WTC11 (cell line): ENCODE measurements at regions of chr16 and their contacts with region 1.

Region 1: DNA sequence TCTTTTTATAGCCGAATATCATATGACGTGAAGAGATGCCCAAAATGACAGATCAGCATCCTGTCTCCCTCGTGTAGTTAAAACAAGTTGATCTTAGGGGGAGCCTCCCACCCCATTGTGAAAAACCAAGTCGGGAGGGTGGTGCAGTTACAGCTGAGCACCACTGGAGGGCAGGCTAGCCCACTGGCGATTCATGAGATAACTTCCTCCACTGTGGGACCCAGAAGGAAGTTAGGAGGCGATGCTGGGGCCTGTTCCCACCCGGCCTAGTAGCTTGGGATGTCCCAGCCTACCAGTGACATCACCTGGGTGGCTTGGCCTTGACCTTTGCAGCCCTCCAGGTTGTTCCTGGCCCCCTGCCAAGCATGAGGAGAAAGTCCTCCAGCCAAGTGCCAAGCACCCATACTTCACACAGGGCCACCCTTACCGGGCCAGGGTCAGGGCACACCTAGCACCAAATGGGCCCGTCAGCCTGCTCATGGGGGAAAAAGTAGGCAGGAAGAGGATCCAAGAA is 8.1 kb upstream of the CPNE2 start:
- DNase-seq: peak; percentile 81
- ATAC-seq: peak; percentile 87
- H3K4me3 Mint-ChIP-seq: no peak overlapping the region
- H3K27ac Mint-ChIP-seq: no peak overlapping the region
- H3K4me1 Mint-ChIP-seq: peaks cover 9% of the 10 kb centered on the region
- H3K27me3 Mint-ChIP-seq: peaks cover 3% of the 10 kb centered on the region; the same call in 1 of the 2 replicates
- CTCF ChIP-seq: peak; percentile 98

Region 2: DNA sequence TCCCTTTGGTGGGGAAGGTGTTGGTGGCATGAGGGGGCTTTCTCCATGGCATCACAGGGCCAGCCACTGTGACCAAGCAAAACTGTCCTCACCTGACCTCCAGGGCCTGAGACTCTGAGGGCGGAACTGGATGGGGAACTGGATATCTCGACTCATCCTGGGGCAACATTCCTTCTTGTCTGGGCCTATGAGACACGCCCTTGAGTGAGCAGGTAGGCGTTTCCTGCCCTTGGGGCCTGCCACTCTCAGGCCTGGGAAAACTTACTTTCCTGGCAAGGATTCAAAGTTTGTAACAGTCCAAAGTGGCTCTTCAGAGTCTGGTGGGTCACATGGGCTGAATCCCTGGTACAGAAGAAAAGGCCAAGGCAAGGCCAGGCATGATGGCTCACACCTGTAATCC is 392.4 kb before region 1 on chr16:
- CTCF ChIA-PET with region 1: no interaction called
- POLR2A ChIA-PET with region 1: no interaction called
- DNase-seq: no peak
- ATAC-seq: peak; percentile 94
- H3K4me3 Mint-ChIP-seq: no peak overlapping the region
- H3K27ac Mint-ChIP-seq: 0 out of 2 replicates have a peak overlapping the region, but pooled peaks have one; percentile 15
- H3K4me1 Mint-ChIP-seq: peaks cover 7% of the 10 kb centered on the region
- H3K27me3 Mint-ChIP-seq: no peaks in the 10 kb centered on the region
- CTCF ChIP-seq: no peak

Region 3: GRCh38 chr16:57098188-57098841 is 14.0 kb after region 1 on chr16:
- CTCF ChIA-PET with region 1: interaction called, 46 read pairs
- POLR2A ChIA-PET with region 1: no interaction called
- DNase-seq: peak; percentile 41
- ATAC-seq: peak; percentile 69
- H3K4me3 Mint-ChIP-seq: no peak overlapping the region
- H3K27ac Mint-ChIP-seq: peak overlapping the region; percentile 75; the same call in 1 of the 2 replicates
- H3K4me1 Mint-ChIP-seq: peaks cover 37% of the 10 kb centered on the region
- H3K27me3 Mint-ChIP-seq: peaks cover 13% of the 10 kb centered on the region
- CTCF ChIP-seq: no peak

Region 4: DNA sequence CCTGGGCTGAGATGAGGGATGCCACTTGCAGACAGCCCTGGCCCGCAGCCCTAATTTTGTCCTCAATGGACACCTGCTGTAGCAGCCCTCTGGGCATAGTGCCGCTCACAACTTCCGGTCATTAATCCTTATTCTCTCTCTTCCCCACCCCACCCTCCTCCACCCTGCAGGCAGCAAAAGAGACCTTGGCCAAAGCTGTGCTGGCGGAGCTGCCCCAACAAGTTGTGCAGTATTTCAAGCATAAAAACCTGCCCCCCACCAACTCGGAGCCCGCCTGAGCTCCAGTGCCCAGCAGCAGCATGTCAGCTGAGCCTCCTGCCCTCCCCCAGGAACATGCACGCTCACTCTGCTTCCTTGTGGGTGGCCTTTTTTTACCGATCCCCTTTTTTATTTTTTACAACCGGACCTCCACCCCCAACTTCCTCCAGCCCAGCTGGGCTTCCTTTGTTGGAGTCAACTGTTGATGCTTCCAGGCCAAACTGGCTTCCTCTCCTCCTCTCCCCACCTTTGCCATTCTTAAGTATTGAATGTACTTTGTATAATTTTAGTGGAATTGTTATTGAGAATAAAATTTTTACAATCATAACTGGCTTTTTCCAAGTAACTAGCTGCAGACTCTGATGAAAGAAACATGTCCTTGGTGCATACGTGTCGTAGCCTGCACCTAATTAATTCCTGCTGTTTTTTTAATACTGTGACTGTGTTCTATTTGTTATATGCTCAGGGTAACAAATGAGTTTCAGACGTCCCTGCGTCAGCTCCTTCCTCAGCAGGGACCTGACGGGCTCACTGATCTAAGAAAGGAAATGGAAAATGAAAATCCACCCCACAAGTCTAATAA is 63.3 kb after region 1 on chr16:
- CTCF ChIA-PET with region 1: interaction called, 14 read pairs
- POLR2A ChIA-PET with region 1: no interaction called
- DNase-seq: no peak
- ATAC-seq: peak; percentile 25
- H3K4me3 Mint-ChIP-seq: peak overlapping the region; percentile 33; the same call in 1 of the 2 replicates
- H3K27ac Mint-ChIP-seq: peak overlapping the region; percentile 97
- H3K4me1 Mint-ChIP-seq: peaks cover 67% of the 10 kb centered on the region
- H3K27me3 Mint-ChIP-seq: no peaks in the 10 kb centered on the region
- CTCF ChIP-seq: no peak

Region 5: GRCh38 chr16:57422026-57422944 is 338.0 kb after region 1 on chr16:
- CTCF ChIA-PET with region 1: interaction called, 12 read pairs
- POLR2A ChIA-PET with region 1: no interaction called
- DNase-seq: peak; percentile 50
- ATAC-seq: peak; percentile 37
- H3K4me3 Mint-ChIP-seq: no peak overlapping the region; the same call in 1 of the 2 replicates
- H3K27ac Mint-ChIP-seq: no peak overlapping the region; the same call in 1 of the 2 replicates
- H3K4me1 Mint-ChIP-seq: peaks cover 26% of the 10 kb centered on the region
- H3K27me3 Mint-ChIP-seq: no peaks in the 10 kb centered on the region
- CTCF ChIP-seq: no peak; the same call in 1 of the 2 replicates